Tibial artery (tissue), 4 donors: ENCODE measurements at regions of chrX and their contacts with region 1.

Region 1: DNA sequence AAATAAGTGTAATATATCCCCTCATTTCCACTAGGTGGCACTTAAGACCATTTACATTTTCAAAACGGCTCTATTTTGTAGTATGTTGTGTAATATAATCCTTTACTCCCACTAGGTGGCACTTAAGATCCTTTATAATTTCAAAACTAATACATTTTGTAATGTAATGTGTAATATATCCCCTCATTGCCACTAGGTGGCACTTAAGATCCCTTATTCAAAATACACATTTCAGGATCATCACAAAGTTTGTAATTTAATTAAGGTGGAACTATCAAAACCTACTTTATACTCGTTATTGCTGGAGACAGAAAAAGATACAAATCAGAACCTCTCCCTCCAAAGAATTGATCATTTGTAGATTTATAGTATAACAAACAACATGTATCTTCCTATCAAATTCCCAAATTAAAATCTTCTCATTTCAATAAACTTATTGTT is 132.5 kb downstream of the ARHGAP6 start:
- DNase-seq: no peak
- H3K4me3 ChIP-seq: no peak overlapping the region
- H3K27ac ChIP-seq: no peak overlapping the region
- H3K4me1 ChIP-seq: peaks cover 0 to 6% (median 0%) of the 10 kb centered on the region in 4 donors
- H3K27me3 ChIP-seq: no peaks in the 10 kb centered on the region
- CTCF ChIP-seq: peak; percentile 66 to 97

Region 2: GRCh38 chrX:11143931-11144678 is 389.1 kb before region 1 on chrX:
- intact Hi-C with region 1: loop called (anchors 5 kb)
- DNase-seq: peak in 1 of 2 donors; percentile 60
- H3K4me3 ChIP-seq: no peak overlapping the region
- H3K27ac ChIP-seq: no peak overlapping the region
- H3K4me1 ChIP-seq: no peaks in the 10 kb centered on the region
- H3K27me3 ChIP-seq: no peaks in the 10 kb centered on the region
- CTCF ChIP-seq: peak; percentile 46 to 60

Region 3: GRCh38 chrX:11375614-11376119 is 157.6 kb before region 1 on chrX:
- intact Hi-C with region 1: loop called (anchors 10 kb)
- DNase-seq: no peak
- H3K4me3 ChIP-seq: no peak overlapping the region
- H3K27ac ChIP-seq: no peak overlapping the region
- H3K4me1 ChIP-seq: peaks cover 0 to 10% (median 0%) of the 10 kb centered on the region in 4 donors
- H3K27me3 ChIP-seq: no peaks in the 10 kb centered on the region
- CTCF ChIP-seq: no peak

Region 4: GRCh38 chrX:11724122-11725017 is 191.1 kb after region 1 on chrX:
- intact Hi-C with region 1: loop called (anchors 2 kb)
- DNase-seq: no peak
- H3K4me3 ChIP-seq: no peak overlapping the region
- H3K27ac ChIP-seq: no peak overlapping the region
- H3K4me1 ChIP-seq: no peaks in the 10 kb centered on the region
- H3K27me3 ChIP-seq: no peaks in the 10 kb centered on the region
- CTCF ChIP-seq: peak; percentile 53 to 72

Region 5: GRCh38 chrX:11770320-11770719 is 237.1 kb after region 1 on chrX:
- intact Hi-C with region 1: loop called (anchors 5 kb)
- DNase-seq: no peak
- H3K4me3 ChIP-seq: no peak overlapping the region
- H3K27ac ChIP-seq: no peak overlapping the region
- H3K4me1 ChIP-seq: no peaks in the 10 kb centered on the region
- H3K27me3 ChIP-seq: no peaks in the 10 kb centered on the region
- CTCF ChIP-seq: peak; percentile 68 to 74